Activated CD8-positive, alpha-beta T cell treated with anti-CD3 and anti-CD28 coated beads, Interleukin-2, amount 10 ng/mL, durations not matched to agents 7 days and 5 days (primary cell): ENCODE measurements at regions of chr16 and their contacts with region 1.

Region 1: DNA sequence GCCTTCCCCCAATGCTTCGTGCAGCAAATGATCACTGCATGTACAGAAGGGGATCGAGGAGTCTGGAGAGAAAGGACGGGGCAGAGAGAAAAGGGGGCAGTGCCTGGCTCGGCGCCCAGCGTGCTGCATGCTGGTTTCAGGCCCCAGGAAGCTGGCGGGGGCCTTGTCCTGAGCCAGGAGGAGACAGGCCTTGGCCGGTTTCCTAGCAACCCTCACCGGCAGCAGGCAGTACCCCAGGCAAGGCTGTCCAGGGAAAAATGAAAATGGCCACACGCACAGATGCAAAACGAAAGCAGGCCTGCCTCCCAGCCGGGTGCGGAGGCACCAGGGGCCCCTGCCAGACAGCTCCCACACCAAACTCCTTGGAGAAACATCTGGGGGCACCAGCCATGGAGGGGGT is 126.3 kb downstream of the ZFHX3 start:
- DNase-seq: peak; percentile 29
- ATAC-seq: no peak
- H3K4me3 Mint-ChIP-seq: peak overlapping the region; percentile 53
- H3K27ac Mint-ChIP-seq: peak overlapping the region; percentile 97
- H3K4me1 Mint-ChIP-seq: peaks cover 43% of the 10 kb centered on the region
- H3K27me3 Mint-ChIP-seq: no peaks in the 10 kb centered on the region

Region 2: GRCh38 chr16:72646615-72647014 is 275.0 kb before region 1 on chr16:
- CTCF ChIA-PET with region 1: no interaction called
- POLR2A ChIA-PET with region 1: no interaction called
- DNase-seq: no peak
- ATAC-seq: no peak
- H3K4me3 Mint-ChIP-seq: no peak overlapping the region
- H3K27ac Mint-ChIP-seq: no peak overlapping the region
- H3K4me1 Mint-ChIP-seq: peaks cover 6% of the 10 kb centered on the region
- H3K27me3 Mint-ChIP-seq: no peaks in the 10 kb centered on the region

Region 3: GRCh38 chr16:72932050-72932449 is 10.4 kb after region 1 on chr16:
- CTCF ChIA-PET with region 1: interaction called, 5 read pairs
- POLR2A ChIA-PET with region 1: interaction called, 10 read pairs
- DNase-seq: peak; percentile 27
- ATAC-seq: peak; percentile 80
- H3K4me3 Mint-ChIP-seq: peak overlapping the region; percentile 33
- H3K27ac Mint-ChIP-seq: peak overlapping the region; percentile 63
- H3K4me1 Mint-ChIP-seq: peaks cover 33% of the 10 kb centered on the region
- H3K27me3 Mint-ChIP-seq: peaks cover 21% of the 10 kb centered on the region